ENCODE measurements at regions of chr3 and their contacts with region 1.

Region 1: GRCh38 chr3:167684388-167684993 is 30.7 kb upstream of the WDR49 start:
- DNase-seq: peak; percentile 32
- H3K4me3 Mint-ChIP-seq: no peak overlapping the region
- H3K27ac Mint-ChIP-seq: no peak overlapping the region
- H3K4me1 Mint-ChIP-seq: peaks cover 7% of the 10 kb centered on the region
- H3K27me3 Mint-ChIP-seq: no peaks in the 10 kb centered on the region

Region 2: DNA sequence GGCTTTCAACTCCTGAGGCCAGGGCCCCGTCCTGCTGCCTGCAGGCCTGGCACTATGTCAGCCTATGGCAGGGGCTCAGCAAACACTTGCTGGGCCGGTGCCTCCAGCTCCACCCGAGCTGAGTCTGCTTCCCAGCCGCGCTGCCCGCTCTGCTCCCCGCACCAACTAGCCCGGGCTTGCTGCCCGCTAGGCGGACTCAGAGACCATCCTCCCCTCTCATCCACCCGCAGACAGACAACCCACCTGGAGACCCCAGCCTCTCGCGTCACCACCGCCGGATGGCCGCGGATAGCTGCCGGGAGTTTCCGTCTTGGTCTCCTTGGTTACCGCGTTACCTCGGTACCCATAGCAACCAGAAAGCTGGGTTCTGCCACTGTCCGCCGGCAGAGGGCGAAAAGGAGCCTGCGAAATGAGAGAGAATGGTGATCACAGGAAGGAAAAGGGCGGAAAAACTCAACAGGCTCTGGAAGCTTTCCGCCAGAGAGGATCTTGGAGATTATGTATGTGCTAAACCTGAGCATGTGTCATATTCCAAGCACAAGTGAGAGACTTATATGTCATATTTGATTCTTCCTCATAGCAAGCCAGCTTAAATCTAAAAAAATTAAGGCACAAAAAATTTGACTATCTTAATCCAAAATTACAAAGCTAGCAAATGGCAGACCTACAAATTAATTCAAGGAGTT is 304.3 kb before region 1 on chr3 and contains the start of gene ZBBX:
- intact Hi-C with region 1: loop called (anchors 1 kb)
- DNase-seq: peak; percentile 81
- H3K4me3 Mint-ChIP-seq: peak within 1 kb of the TSS; percentile 74
- H3K27ac Mint-ChIP-seq: no peak within 1 kb of the TSS
- H3K4me1 Mint-ChIP-seq: peaks cover 9% of the 10 kb centered on the region
- H3K27me3 Mint-ChIP-seq: peaks cover 4% of the 10 kb centered on the region
- total RNA-seq, gene ZBBX: not detected in 2 replicates

Region 3: GRCh38 chr3:167882067-167882667 is 197.7 kb after region 1 on chr3:
- intact Hi-C with region 1: loop called (anchors 5 kb)
- DNase-seq: no peak
- H3K4me3 Mint-ChIP-seq: no peak overlapping the region
- H3K27ac Mint-ChIP-seq: no peak overlapping the region
- H3K4me1 Mint-ChIP-seq: no peaks in the 10 kb centered on the region
- H3K27me3 Mint-ChIP-seq: peaks cover 9% of the 10 kb centered on the region